ENCODE measurements at regions of chr9 and their contacts with region 1.

Region 1: GRCh38 chr9:34145165-34145564 is 18.7 kb upstream of the DCAF12 start:
- DNase-seq: no peak
- ATAC-seq: no peak
- H3K4me3 ChIP-seq: no peak overlapping the region
- H3K4me3 Mint-ChIP-seq: no peak overlapping the region
- H3K27ac ChIP-seq: no peak overlapping the region
- H3K27ac Mint-ChIP-seq: no peak overlapping the region
- H3K4me1 ChIP-seq: no peaks in the 10 kb centered on the region
- H3K4me1 Mint-ChIP-seq: no peaks in the 10 kb centered on the region
- H3K27me3 ChIP-seq: no peaks in the 10 kb centered on the region
- H3K27me3 Mint-ChIP-seq: peaks cover 0 to 3% of the 10 kb centered on the region in 2 donors

Region 2: GRCh38 chr9:34048923-34049697 is 96.1 kb before region 1 on chr9:
- CTCF ChIA-PET with region 1: no interaction called
- POLR2A ChIA-PET with region 1: no interaction called
- DNase-seq: peak; percentile 92 to 99 (median 96)
- ATAC-seq: peak; percentile 85 to 88 (median 87)
- H3K4me3 ChIP-seq: peak overlapping the region; percentile 90 to 92
- H3K4me3 Mint-ChIP-seq: peak overlapping the region; percentile 97 to 99 (median 97)
- H3K27ac ChIP-seq: peak overlapping the region; percentile 88
- H3K27ac Mint-ChIP-seq: peak overlapping the region; percentile 99 to 100
- H3K4me1 ChIP-seq: peaks cover 18 to 21% of the 10 kb centered on the region in 2 experiments
- H3K4me1 Mint-ChIP-seq: peaks cover 25 to 36% (median 34%) of the 10 kb centered on the region in 3 donors
- H3K27me3 ChIP-seq: no peaks in the 10 kb centered on the region
- H3K27me3 Mint-ChIP-seq: peaks cover 0 to 2% of the 10 kb centered on the region in 2 donors

Region 3: GRCh38 chr9:34197756-34198711 is 52.9 kb after region 1 on chr9:
- CTCF ChIA-PET with region 1: no interaction called
- POLR2A ChIA-PET with region 1: interaction called in 1 of 2 experiments, 10 read pairs
- DNase-seq: no peak
- ATAC-seq: no peak
- H3K4me3 ChIP-seq: no peak overlapping the region
- H3K4me3 Mint-ChIP-seq: no peak overlapping the region
- H3K27ac ChIP-seq: no peak overlapping the region
- H3K27ac Mint-ChIP-seq: peak overlapping the region; percentile 28 to 61
- H3K4me1 ChIP-seq: peaks cover 9 to 34% of the 10 kb centered on the region in 2 experiments
- H3K4me1 Mint-ChIP-seq: peaks cover 55 to 62% (median 55%) of the 10 kb centered on the region in 3 donors
- H3K27me3 ChIP-seq: no peaks in the 10 kb centered on the region
- H3K27me3 Mint-ChIP-seq: no peaks in the 10 kb centered on the region

Measured in T-cell (primary cell).